Activated T-helper 1 cell treated with anti-CD3 and anti-CD28 coated beads, Interleukin-12 subunit alpha, Interleukin-12 subunit beta, Interleukin-2, Interleukin-4 antibody, amounts not matched to agents 30 ng/mL and 10 ng/mL and 1 ng/mL, durations not matched to agents 14 hours and 24 hours and 36 hours (primary cell): ENCODE measurements at regions of chr14 and their contacts with region 1.

Region 1: DNA sequence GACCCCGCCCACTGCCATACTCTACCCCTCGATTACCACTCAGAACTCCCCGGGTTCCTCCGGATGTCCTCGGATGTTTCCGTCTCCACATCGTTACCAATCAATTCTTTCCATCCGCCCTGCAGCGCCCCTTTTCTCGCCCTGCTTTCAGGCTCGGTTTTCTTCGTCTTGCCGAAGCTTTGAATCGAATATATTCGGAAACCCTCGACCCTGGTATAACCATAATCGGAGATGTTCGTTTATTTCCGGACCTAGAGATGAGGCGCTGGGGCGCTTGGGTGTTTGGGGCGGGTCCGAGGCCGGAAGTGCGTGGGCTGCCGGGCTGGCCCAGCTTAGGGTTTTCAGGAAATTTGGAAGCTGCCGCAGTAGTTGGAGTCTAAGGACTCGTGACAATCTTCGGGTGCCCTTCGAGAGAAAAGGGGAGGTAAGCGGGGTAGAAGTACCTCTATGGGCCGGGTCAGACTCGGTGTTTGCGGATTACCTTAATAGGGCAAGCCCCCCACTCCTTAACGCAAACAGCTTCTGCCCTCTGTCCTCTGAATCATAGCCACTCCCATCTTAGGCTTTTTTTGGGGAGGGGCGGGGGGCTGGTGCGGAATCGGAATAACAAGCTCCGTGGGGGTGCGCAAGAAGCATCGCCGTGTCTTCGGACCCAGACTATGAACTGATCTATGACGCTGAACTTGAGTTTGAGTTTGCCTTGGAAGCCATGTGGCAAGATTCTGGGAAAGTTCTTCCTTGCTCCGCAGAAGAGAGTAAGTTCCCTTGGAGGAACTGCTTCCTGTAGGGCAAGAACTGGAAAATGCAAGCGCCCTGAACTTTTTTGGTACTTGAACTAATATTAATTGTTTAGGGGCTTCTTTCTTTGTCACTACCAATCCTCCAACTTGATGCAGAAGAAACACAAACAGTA is at the start of gene C14orf119:
- DNase-seq: peak; percentile 99
- H3K4me3 Mint-ChIP-seq: no peak within 1 kb of the TSS
- H3K27ac Mint-ChIP-seq: no peak within 1 kb of the TSS
- H3K4me1 Mint-ChIP-seq: peaks cover 15% of the 10 kb centered on the region
- H3K27me3 Mint-ChIP-seq: no peaks in the 10 kb centered on the region
- total RNA-seq, gene C14orf119: 49.7 and 55.6 TPM in 2 replicates

Region 2: DNA sequence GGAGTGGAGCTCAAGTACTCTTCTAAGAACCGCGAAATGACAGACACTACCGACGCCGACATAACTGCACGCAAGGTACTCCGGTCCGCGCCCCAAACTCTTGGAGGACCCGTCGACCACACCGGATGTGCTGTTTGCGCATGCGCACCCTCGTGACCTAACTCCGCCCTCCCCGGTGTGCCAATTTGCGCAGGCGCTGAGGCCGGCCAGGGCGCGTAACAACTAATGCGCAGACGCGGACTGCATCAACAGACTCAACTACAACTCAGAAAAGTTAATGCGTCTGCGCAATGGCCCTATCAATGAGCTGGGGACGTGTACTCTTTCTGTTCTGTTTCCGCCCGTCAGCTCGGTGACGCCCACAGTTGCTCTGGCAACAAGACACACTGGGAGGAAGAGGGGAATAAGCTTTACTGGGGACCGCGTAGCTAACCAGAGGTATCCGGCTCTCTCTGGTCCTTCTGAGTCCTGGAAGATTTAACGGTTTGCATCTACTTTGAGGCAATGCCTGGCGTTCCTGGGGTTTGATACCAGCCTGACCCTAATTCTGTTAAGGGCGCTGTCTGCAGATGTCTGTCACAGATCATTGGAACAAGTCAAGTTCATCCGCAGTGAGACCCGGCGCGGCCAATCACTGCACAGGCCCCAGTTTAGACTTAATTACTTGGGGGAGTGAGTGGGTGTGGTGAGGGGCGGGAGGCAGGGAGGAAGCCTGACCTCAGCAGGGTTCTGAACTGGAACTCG is 506.2 kb before region 1 on chr14 and contains the start of gene DAD1:
- intact Hi-C with region 1: loop called (anchors 10 kb)
- DNase-seq: peak; percentile 100
- H3K4me3 Mint-ChIP-seq: peak within 1 kb of the TSS; percentile 91
- H3K27ac Mint-ChIP-seq: peak within 1 kb of the TSS; percentile 96
- H3K4me1 Mint-ChIP-seq: peaks cover 55% of the 10 kb centered on the region
- H3K27me3 Mint-ChIP-seq: no peaks in the 10 kb centered on the region
- total RNA-seq, gene DAD1: 228 and 229 TPM in 2 replicates

Region 3: GRCh38 chr14:22918804-22919600 is 176.4 kb before region 1 on chr14 and contains the start of gene RBM23:
- intact Hi-C with region 1: loop called (anchors 2 kb)
- DNase-seq: peak; percentile 99
- H3K4me3 Mint-ChIP-seq: peak within 1 kb of the TSS; percentile 95
- H3K27ac Mint-ChIP-seq: peak within 1 kb of the TSS; percentile 100
- H3K4me1 Mint-ChIP-seq: peaks cover 54% of the 10 kb centered on the region
- H3K27me3 Mint-ChIP-seq: peaks cover 4% of the 10 kb centered on the region
- total RNA-seq, gene RBM23: 86.4 and 90.5 TPM in 2 replicates

Region 4: GRCh38 chr14:23006544-23007419 is 88.7 kb before region 1 on chr14:
- intact Hi-C with region 1: loop called (anchors 1 kb)
- DNase-seq: peak; percentile 98
- H3K4me3 Mint-ChIP-seq: peak overlapping the region; percentile 97
- H3K27ac Mint-ChIP-seq: peak overlapping the region; percentile 97
- H3K4me1 Mint-ChIP-seq: peaks cover 52% of the 10 kb centered on the region
- H3K27me3 Mint-ChIP-seq: no peaks in the 10 kb centered on the region

Region 5: GRCh38 chr14:23068476-23069412 is 26.7 kb before region 1 on chr14:
- intact Hi-C with region 1: loop called (anchors 1 kb)
- DNase-seq: peak; percentile 65
- H3K4me3 Mint-ChIP-seq: peak overlapping the region; percentile 74
- H3K27ac Mint-ChIP-seq: peak overlapping the region; percentile 53
- H3K4me1 Mint-ChIP-seq: peaks cover 42% of the 10 kb centered on the region
- H3K27me3 Mint-ChIP-seq: no peaks in the 10 kb centered on the region

Region 6: DNA sequence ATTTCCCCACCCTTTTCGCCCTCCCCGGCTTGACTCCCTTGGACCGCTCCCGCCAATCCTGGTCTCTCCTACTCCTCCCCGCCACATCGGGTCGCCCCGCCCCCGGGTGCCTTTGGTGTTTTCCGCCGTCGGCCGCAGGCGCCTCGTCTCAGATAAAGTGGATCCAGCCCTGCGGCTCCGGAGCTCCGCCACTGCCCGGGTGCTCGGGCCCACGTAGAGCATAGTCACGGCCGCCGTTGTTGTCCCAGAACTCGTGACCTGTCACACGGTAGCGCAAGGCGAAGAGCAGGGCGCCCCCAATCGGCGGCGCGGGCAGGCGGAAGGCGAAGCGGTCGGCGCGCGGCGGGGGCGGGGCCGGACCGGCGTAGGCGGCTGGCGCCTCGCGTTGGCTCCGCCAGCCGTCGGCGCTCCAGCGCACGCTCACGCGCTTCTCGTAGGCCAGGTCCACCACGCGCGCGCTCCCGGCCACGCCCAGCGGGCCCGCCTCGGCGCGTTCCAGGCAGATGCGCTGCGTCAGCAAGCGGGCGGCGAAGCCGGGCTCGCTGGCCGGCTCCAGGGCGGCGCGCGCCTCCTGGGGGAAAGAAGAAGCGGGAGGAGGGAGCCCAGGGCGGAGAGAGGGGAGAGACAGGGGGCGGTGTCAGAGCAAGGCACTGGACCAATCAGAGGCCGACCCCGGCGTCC is 206.0 kb after region 1 on chr14:
- intact Hi-C with region 1: loop called (anchors 1 kb)
- DNase-seq: peak; percentile 99
- H3K4me3 Mint-ChIP-seq: peak overlapping the region; percentile 91
- H3K27ac Mint-ChIP-seq: peak overlapping the region; percentile 97
- H3K4me1 Mint-ChIP-seq: peaks cover 29% of the 10 kb centered on the region
- H3K27me3 Mint-ChIP-seq: no peaks in the 10 kb centered on the region

Region 7: GRCh38 chr14:24232121-24232644 is 1136.7 kb after region 1 on chr14 and contains the start of gene NEDD8:
- intact Hi-C with region 1: loop called (anchors 10 kb)
- DNase-seq: peak; percentile 84
- H3K4me3 Mint-ChIP-seq: peak within 1 kb of the TSS; percentile 93
- H3K27ac Mint-ChIP-seq: peak within 1 kb of the TSS; percentile 91
- H3K4me1 Mint-ChIP-seq: peaks cover 50% of the 10 kb centered on the region
- H3K27me3 Mint-ChIP-seq: no peaks in the 10 kb centered on the region
- total RNA-seq, gene NEDD8: 177 and 185 TPM in 2 replicates